ENCODE measurements at regions of chr7 and their contacts with region 1.

Region 1: GRCh38 chr7:46630031-46630430 is 709.0 kb upstream of the IGFBP3 start:
- DNase-seq: no peak
- ATAC-seq: no peak
- H3K4me3 ChIP-seq: no peak overlapping the region
- H3K4me3 Mint-ChIP-seq: no peak overlapping the region
- H3K27ac ChIP-seq: no peak overlapping the region
- H3K27ac Mint-ChIP-seq: no peak overlapping the region
- H3K4me1 ChIP-seq: no peaks in the 10 kb centered on the region
- H3K4me1 Mint-ChIP-seq: no peaks in the 10 kb centered on the region
- H3K27me3 ChIP-seq: no peaks in the 10 kb centered on the region
- H3K27me3 Mint-ChIP-seq: no peaks in the 10 kb centered on the region
- CTCF ChIP-seq: no peak

Region 2: DNA sequence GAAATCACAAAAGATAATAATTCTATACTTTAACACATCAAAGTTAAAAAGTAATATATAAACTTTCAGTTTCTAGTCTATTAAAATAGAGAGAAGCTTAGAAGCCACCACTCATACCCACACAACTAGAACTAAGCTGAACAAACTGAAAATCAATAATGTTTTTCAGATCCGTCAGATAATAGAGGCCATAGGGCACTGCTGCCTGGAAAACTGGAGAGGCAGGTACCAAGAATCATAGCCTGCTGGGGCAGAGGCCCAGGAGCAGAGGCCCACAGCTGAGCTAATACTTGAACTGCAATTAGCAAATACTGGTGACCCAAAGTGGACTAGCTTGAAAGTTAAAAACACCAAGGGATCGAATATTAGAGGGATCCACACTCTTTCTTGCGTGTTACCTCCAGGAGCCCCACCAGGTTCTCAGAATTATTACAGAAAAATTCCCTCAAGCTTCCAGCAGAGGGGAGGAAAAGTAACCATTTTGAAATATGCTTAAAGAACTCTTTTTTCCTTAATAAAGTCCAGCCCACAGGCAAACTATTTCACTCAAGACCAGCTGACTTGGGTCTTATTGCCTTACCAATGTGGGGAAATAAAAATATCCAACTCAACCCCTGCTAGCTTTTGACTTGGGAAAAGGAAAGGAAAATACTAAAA is 65.1 kb after region 1 on chr7:
- CTCF ChIA-PET with region 1: no interaction called
- POLR2A ChIA-PET with region 1: no interaction called
- intact Hi-C with region 1: loop called in 1 of 2 experiments (anchors 10 kb)
- DNase-seq: no peak
- ATAC-seq: no peak
- H3K4me3 ChIP-seq: no peak overlapping the region
- H3K4me3 Mint-ChIP-seq: no peak overlapping the region
- H3K27ac ChIP-seq: no peak overlapping the region
- H3K27ac Mint-ChIP-seq: no peak overlapping the region
- H3K4me1 ChIP-seq: no peaks in the 10 kb centered on the region
- H3K4me1 Mint-ChIP-seq: no peaks in the 10 kb centered on the region
- H3K27me3 ChIP-seq: no peaks in the 10 kb centered on the region
- H3K27me3 Mint-ChIP-seq: no peaks in the 10 kb centered on the region
- CTCF ChIP-seq: no peak